Dendritic cell treated with granulocyte-macrophage colony-stimulating factor and Interleukin-4, amounts not matched to agents 40 ng/mL and 50 ng/mL, for 4 days (primary cell): ENCODE measurements at regions of chr7 and their contacts with region 1.

Region 1: GRCh38 chr7:87876040-87876868 is at the starts of genes DBF4 and SLC25A40:
- H3K4me3 Mint-ChIP-seq: peak within 1 kb of the TSS; percentile 96
- H3K27ac Mint-ChIP-seq: peak within 1 kb of the TSS; percentile 100
- H3K4me1 Mint-ChIP-seq: peaks cover 41% of the 10 kb centered on the region
- H3K27me3 Mint-ChIP-seq: no peaks in the 10 kb centered on the region

Region 2: DNA sequence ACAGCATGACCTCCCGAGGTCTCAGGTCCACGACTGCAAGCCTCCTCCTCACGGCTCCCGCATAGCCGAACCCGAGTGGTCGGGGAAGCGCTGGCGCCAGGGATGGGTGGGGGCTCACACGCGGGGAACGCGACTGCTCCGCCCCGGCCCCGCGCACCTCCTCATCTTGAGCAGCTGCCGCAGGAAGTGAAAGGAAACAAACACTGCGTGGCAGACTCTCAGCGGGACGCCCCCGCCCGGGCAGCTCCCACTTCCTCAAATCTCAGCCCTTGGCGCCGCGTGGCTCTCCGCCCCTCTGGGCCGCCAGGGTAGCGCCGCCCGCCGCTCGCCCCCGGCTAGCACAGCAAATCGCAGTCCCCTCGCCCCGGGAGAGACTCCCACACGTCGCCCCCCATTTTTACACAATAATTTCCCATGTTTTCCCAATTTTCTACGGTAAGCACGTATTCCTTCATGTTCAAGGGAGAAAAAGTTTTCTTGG is 656.7 kb before region 1 on chr7 and contains the start of gene TMEM243:
- intact Hi-C with region 1: loop called (anchors 5 kb)
- H3K4me3 Mint-ChIP-seq: peak within 1 kb of the TSS; percentile 90
- H3K27ac Mint-ChIP-seq: peak within 1 kb of the TSS; percentile 94
- H3K4me1 Mint-ChIP-seq: peaks cover 30% of the 10 kb centered on the region
- H3K27me3 Mint-ChIP-seq: peaks cover 11% of the 10 kb centered on the region

Region 3: DNA sequence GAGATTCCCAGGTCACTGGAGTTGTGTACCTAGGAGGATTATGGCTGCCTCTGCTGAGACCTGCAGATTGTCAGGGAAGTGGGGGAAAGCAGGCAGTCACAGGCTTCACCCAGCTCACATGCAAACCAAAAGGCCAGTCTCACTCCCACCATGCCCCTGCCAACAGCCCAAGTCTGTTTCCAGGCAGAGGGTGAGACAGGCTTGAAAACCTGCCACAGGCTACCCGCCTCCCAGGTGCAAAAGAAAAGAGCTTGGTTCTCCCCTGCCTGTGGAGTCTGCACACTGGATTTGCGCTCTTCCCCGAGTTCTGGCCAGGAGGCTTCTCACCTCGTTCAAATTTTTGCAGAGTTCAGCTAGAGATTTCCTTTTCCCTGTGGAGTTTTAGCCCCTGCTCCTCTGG is 128.6 kb before region 1 on chr7:
- intact Hi-C with region 1: no loop called
- H3K4me3 Mint-ChIP-seq: no peak overlapping the region
- H3K27ac Mint-ChIP-seq: no peak overlapping the region
- H3K4me1 Mint-ChIP-seq: no peaks in the 10 kb centered on the region
- H3K27me3 Mint-ChIP-seq: no peaks in the 10 kb centered on the region

Region 4: GRCh38 chr7:87784423-87784822 is 91.8 kb before region 1 on chr7:
- intact Hi-C with region 1: no loop called
- H3K4me3 Mint-ChIP-seq: no peak overlapping the region
- H3K27ac Mint-ChIP-seq: no peak overlapping the region
- H3K4me1 Mint-ChIP-seq: no peaks in the 10 kb centered on the region
- H3K27me3 Mint-ChIP-seq: no peaks in the 10 kb centered on the region

Region 5: DNA sequence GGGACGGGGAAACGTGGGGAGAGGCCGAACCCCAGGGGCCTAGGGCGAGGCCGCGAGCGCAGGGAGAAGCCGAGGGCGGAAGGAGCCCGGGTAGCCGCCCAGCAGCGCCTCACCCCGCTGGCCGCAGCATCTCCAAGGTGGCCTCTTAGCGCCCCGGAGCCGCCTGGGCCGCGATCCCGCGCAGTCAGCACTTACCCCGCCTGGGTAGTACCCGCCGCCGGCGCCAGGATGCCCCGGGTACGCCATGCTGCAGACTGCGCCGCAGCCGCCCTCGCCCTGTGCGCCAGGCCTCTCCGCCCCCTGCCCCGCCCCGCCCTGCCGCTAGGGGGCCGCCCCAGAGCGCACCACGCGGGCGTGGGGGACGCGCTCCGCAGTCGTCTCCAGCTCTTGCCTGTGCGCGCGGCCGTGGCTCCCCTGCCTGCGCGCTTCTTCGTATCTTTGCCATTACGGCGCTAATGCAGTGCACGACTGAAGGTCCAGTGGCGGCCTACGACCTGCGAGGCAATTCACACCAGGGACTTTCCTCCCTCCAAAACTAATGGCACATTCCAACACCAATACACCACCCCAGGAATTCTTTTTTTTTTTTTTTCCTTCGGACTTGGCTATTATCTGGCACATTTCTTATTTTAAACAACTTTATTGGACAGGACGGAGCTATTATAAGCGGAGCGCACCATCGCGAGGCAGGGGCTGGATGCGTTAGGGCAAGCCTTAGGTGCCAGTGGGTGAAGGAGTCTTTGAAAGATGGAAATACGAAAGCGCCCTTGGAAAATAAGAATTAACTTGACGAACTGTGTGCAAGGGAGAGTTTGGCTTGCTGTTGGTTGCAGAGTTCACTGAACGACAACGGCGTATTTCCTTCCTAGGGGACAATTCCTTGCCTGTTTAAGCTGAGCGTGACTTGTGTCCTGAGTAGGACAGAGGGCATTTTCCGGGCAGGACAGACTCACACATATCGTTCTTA is 343.8 kb after region 1 on chr7 and contains the start of gene SRI:
- intact Hi-C with region 1: loop called (anchors 5 kb)
- H3K4me3 Mint-ChIP-seq: peak within 1 kb of the TSS; percentile 80
- H3K27ac Mint-ChIP-seq: peak within 1 kb of the TSS; percentile 95
- H3K4me1 Mint-ChIP-seq: peaks cover 25% of the 10 kb centered on the region
- H3K27me3 Mint-ChIP-seq: no peaks in the 10 kb centered on the region